ENCODE measurements at regions of chr11 and their contacts with region 1.

Region 1: DNA sequence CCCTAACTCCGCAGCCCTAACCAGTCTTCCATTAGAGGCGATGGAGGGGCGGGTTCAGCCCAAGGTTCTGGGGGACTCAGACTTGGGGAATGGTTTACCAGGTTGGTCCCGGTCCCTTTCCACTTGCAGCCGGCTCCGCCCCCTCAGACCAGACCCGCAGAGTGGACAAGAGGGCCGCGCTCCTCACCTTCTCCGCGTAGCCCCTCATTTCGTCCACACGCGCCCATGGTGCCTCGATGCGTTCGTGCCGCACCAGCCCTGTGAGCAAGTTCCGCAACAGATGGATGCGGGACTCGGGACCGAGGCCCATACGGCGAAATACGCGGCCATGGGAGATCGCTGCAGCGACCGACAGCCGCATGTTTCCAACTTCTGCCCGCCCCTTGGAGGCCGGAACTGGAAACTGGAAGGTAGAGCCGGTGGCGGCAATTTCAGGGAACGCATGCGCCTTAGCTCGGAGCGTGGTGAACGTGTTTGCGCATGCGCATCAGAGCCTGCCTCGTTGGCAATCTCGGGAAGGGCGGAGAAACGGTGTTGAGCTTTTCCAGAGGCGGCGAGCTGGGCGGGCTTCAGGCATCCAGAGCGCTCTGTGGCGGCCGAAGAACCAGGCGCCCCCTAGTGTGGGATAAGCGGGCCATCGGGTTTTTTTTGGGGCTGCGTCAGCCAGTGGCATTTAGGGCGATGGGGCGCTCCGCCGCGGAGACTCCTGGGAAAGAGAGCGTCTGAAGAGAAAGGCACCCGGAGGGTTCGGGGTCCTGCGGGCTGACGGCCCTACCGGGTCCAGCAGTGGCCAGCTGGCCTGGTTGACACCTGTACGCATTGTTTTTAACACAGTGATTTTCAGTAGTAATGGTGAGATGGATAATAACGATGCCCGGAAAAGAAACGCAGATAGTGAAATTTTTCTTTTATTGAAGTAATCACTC is at the start of gene MRPL17:
- DNase-seq: peak; percentile 99
- ATAC-seq: peak; percentile 96
- H3K4me3 Mint-ChIP-seq: peak within 1 kb of the TSS; percentile 97
- H3K27ac Mint-ChIP-seq: peak within 1 kb of the TSS; percentile 100
- H3K4me1 Mint-ChIP-seq: peaks cover 29% of the 10 kb centered on the region
- H3K27me3 Mint-ChIP-seq: no peaks in the 10 kb centered on the region
- total RNA-seq, gene MRPL17: 118 to 156 TPM

Region 2: GRCh38 chr11:6012035-6012668 is 671.0 kb before region 1 on chr11:
- CTCF ChIA-PET with region 1: no interaction called
- POLR2A ChIA-PET with region 1: no interaction called
- intact Hi-C with region 1: no loop called
- DNase-seq: no peak
- ATAC-seq: no peak
- H3K4me3 Mint-ChIP-seq: no peak overlapping the region
- H3K27ac Mint-ChIP-seq: no peak overlapping the region
- H3K4me1 Mint-ChIP-seq: no peaks in the 10 kb centered on the region
- H3K27me3 Mint-ChIP-seq: peaks cover 13% of the 10 kb centered on the region

Region 3: DNA sequence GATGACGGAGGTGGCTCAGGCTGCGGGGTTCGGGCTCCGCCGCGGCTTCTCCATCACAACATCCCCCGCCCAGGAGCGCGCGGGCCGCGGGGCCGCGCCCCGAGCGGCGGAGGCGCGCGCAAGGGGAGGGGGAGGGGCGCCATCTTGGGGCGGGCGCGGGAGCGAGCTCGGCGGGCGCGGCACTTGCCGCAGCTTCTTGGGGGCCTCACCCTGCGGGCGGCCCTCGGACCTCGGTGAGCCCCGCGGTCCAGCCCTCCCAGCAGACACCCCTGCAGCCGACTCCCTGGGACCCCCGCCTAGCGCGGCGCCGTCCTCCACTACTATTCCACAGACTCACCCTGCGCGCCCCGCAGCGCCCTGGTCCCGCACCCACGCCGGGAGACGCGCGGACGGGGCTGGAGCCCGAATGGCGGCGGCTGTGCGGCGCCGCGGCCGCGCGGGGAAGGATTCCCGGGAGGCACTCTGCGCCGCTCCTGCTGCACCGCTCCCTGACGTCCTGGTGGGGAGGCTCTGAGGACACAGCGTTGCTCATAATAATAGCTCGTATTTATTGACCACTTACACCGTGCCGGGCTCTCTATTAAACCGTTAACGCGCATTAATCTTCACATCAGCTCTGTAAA is 264.1 kb before region 1 on chr11 and contains the start of gene APBB1:
- CTCF ChIA-PET with region 1: interaction called, 3 read pairs
- POLR2A ChIA-PET with region 1: no interaction called
- intact Hi-C with region 1: loop called in 1 of 2 experiments (anchors 10 kb)
- DNase-seq: peak; percentile 86
- ATAC-seq: peak; percentile 54
- H3K4me3 Mint-ChIP-seq: peak within 1 kb of the TSS; percentile 72
- H3K27ac Mint-ChIP-seq: peak within 1 kb of the TSS; percentile 73
- H3K4me1 Mint-ChIP-seq: peaks cover 7% of the 10 kb centered on the region
- H3K27me3 Mint-ChIP-seq: peaks cover 6% of the 10 kb centered on the region
- total RNA-seq, gene APBB1: 43.2 to 49.8 TPM

Region 4: DNA sequence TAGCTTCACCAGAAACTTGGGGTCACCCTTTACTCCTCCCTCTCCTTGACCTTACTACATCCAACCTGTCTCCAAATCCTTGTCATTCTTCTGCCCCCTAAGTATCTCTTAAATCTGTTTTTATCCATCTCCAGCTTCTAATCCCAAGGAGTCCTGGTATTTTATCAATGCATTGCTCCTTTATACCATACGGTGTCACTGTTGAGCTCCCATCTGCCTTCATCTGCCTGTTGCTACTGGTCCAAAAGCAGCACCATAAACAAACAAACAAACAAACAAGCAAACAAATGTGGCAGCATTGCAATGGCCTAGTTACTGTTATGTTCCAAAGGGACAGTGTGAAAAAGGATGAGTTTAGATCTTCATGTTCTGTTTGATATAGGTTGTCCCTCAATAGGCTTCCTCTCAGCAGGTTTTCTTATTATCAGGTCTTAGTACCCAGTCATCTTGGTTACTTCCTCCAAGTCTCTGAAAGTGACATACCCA is 151.9 kb before region 1 on chr11:
- CTCF ChIA-PET with region 1: interaction called, 18 read pairs
- POLR2A ChIA-PET with region 1: no interaction called
- intact Hi-C with region 1: loop called (anchors 1 kb)
- DNase-seq: peak; percentile 26
- ATAC-seq: peak; percentile 71
- H3K4me3 Mint-ChIP-seq: no peak overlapping the region
- H3K27ac Mint-ChIP-seq: no peak overlapping the region
- H3K4me1 Mint-ChIP-seq: peaks cover 11% of the 10 kb centered on the region
- H3K27me3 Mint-ChIP-seq: no peaks in the 10 kb centered on the region

Region 5: DNA sequence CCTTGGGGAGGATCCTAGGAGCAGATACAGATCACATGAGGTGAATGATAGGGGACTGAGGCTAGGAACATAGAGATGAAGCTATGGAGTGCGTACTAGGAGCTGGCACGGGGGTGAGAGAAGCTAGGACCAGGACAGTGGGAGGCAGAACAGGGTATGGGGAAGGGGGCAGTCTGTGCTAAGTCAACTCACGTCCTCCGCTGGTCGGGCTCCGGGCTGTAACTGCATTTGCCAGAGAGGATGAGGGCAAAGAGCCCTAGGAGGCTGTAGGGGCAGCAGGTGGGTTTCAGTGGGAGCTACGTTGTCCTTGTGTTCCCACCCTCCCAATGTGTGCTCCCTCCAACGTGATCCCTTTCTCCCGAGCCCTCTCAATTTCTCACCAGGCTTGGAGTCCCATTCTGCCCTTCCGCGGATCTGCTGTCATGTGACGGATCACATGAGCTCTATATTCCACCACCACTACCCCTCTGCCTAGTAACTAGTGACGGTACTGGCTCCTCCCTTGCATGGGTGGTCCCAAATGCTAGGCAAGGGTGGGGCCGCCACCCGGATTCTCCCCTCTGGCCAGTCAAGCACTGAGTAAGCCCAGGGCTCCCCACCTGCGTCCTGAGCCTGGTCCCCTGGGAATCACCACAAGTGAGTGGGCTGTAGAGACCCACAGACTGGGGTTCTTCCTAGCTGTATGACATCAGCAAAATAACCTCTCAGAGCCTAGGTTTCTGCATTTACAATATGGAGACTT is 64.0 kb before region 1 on chr11 and contains the start of gene TPP1:
- CTCF ChIA-PET with region 1: interaction called, 19 read pairs
- POLR2A ChIA-PET with region 1: interaction called, 3 read pairs
- intact Hi-C with region 1: loop called (anchors 1 kb)
- DNase-seq: peak; percentile 91
- ATAC-seq: peak; percentile 93
- H3K4me3 Mint-ChIP-seq: no peak within 1 kb of the TSS
- H3K27ac Mint-ChIP-seq: no peak within 1 kb of the TSS
- H3K4me1 Mint-ChIP-seq: peaks cover 8% of the 10 kb centered on the region
- H3K27me3 Mint-ChIP-seq: no peaks in the 10 kb centered on the region
- total RNA-seq, gene TPP1: 38.1 to 47.9 TPM

Region 6: DNA sequence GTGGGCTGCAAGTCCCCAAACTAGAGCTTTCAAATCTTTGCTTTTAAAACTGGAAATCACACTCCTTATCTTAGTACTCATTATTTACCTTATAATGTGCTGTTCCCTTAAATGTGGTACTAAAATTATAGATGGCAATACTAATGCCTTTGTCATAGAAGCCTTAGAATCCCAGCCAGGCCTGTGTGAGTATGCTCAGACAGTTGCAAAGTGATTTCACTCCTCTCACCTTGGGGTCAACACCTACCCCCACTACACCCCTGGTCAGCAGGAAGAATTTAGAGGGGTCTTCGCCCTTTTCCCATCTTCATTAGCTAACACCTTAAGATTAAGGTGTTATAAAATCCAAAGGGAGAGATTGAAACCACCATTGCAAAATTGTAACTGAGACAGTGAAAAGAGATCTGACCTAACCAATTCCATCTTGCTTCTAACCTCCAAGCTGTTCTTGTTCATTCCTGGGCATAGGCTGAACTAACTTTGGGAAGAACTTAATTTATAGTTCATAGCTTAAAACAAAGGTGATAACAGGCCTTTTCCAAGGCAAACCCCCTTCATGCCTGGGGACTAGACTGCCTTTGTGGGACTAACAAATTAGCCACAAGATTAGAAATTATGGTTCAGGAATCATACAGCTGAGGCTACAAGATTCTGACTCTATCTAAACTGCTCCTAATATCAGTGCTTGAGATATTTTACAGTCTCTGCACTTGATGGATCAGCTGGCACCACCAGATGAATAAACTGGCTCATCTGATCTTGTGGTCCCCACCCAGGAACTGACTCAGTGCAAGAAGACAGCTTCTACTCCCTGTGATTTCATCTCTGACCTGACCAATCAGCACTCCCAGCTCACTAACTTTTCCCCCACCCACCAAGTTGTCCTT is 10.4 kb after region 1 on chr11:
- CTCF ChIA-PET with region 1: interaction called, 12 read pairs
- POLR2A ChIA-PET with region 1: no interaction called
- intact Hi-C with region 1: loop called (anchors 1 kb)
- DNase-seq: peak; percentile 75
- ATAC-seq: peak; percentile 92
- H3K4me3 Mint-ChIP-seq: no peak overlapping the region
- H3K27ac Mint-ChIP-seq: peak overlapping the region; percentile 20
- H3K4me1 Mint-ChIP-seq: peaks cover 32% of the 10 kb centered on the region
- H3K27me3 Mint-ChIP-seq: no peaks in the 10 kb centered on the region

Region 7: GRCh38 chr11:6737872-6738466 is 54.8 kb after region 1 on chr11:
- CTCF ChIA-PET with region 1: interaction called, 8 read pairs
- POLR2A ChIA-PET with region 1: no interaction called
- intact Hi-C with region 1: loop called in 1 of 2 experiments (anchors 1 kb)
- DNase-seq: peak; percentile 76
- ATAC-seq: peak; percentile 52
- H3K4me3 Mint-ChIP-seq: no peak overlapping the region
- H3K27ac Mint-ChIP-seq: peak overlapping the region; percentile 73
- H3K4me1 Mint-ChIP-seq: peaks cover 94% of the 10 kb centered on the region
- H3K27me3 Mint-ChIP-seq: no peaks in the 10 kb centered on the region

Measured in activated CD4-positive, alpha-beta T cell treated with anti-CD3 and anti-CD28 coated beads for 36 hours (primary cell).